CD8-positive, alpha-beta memory T cell (primary cell): ENCODE measurements at regions of chr14 and their contacts with region 1.

Region 1: GRCh38 chr14:91114079-91115065 is 499 bp downstream of the DGLUCY start:
- DNase-seq: peak; percentile 44 to 76 (median 65)
- H3K4me3 ChIP-seq: peak overlapping the region; percentile 78
- H3K4me3 Mint-ChIP-seq: peak overlapping the region; percentile 90 to 98 (median 96)
- H3K27ac ChIP-seq: peak overlapping the region; percentile 88
- H3K27ac Mint-ChIP-seq: peak overlapping the region; percentile 90 to 99 (median 97)
- H3K4me1 ChIP-seq: peaks cover 59% of the 10 kb centered on the region
- H3K4me1 Mint-ChIP-seq: peaks cover 62 to 78% (median 77%) of the 10 kb centered on the region in 3 donors
- H3K27me3 ChIP-seq: no peaks in the 10 kb centered on the region
- H3K27me3 Mint-ChIP-seq: peaks cover 0 to 2% of the 10 kb centered on the region in 2 donors

Region 2: DNA sequence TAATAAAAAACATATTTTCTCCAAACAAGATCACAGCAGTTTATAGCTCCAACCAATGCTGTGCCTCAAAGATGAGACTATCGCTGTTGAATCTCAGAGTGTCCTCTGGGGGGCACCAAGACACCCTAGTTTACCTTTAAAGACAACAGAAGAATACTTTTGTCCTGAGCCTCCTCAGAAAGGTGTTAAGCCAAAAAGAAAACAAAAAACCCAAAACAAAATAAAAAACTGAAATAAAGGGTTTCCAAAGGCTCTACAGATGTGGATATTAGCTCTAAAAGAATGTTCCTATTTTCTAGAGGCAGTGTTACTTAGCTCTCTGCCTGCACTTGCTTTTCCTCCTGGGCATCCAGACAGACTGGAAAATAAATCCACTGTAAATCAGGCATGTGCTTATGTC is 211.3 kb before region 1 on chr14:
- CTCF ChIA-PET with region 1: interaction called, 10 read pairs
- POLR2A ChIA-PET with region 1: no interaction called
- DNase-seq: peak; percentile 24 to 66 (median 45)
- H3K4me3 ChIP-seq: no peak overlapping the region
- H3K4me3 Mint-ChIP-seq: no peak overlapping the region
- H3K27ac ChIP-seq: no peak overlapping the region
- H3K27ac Mint-ChIP-seq: peak overlapping the region in 2 of 8 donors; percentile 38 to 48
- H3K4me1 ChIP-seq: no peaks in the 10 kb centered on the region
- H3K4me1 Mint-ChIP-seq: peaks cover 0 to 7% (median 0%) of the 10 kb centered on the region in 3 donors
- H3K27me3 ChIP-seq: no peaks in the 10 kb centered on the region
- H3K27me3 Mint-ChIP-seq: no peaks in the 10 kb centered on the region

Region 3: GRCh38 chr14:90985601-90986242 is 128.7 kb before region 1 on chr14:
- CTCF ChIA-PET with region 1: no interaction called
- POLR2A ChIA-PET with region 1: no interaction called
- DNase-seq: no peak
- H3K4me3 ChIP-seq: no peak overlapping the region
- H3K4me3 Mint-ChIP-seq: no peak overlapping the region
- H3K27ac ChIP-seq: no peak overlapping the region
- H3K27ac Mint-ChIP-seq: peak overlapping the region in 1 of 8 donors; percentile 25
- H3K4me1 ChIP-seq: no peaks in the 10 kb centered on the region
- H3K4me1 Mint-ChIP-seq: peaks cover 9 to 16% (median 10%) of the 10 kb centered on the region in 3 donors
- H3K27me3 ChIP-seq: no peaks in the 10 kb centered on the region
- H3K27me3 Mint-ChIP-seq: no peaks in the 10 kb centered on the region

Region 4: GRCh38 chr14:91016800-91017410 is 97.5 kb before region 1 on chr14:
- CTCF ChIA-PET with region 1: no interaction called
- POLR2A ChIA-PET with region 1: no interaction called
- DNase-seq: no peak
- H3K4me3 ChIP-seq: no peak overlapping the region
- H3K4me3 Mint-ChIP-seq: no peak overlapping the region
- H3K27ac ChIP-seq: no peak overlapping the region
- H3K27ac Mint-ChIP-seq: peak overlapping the region in 1 of 8 donors; percentile 33
- H3K4me1 ChIP-seq: peaks cover 26% of the 10 kb centered on the region
- H3K4me1 Mint-ChIP-seq: peaks cover 11 to 44% (median 31%) of the 10 kb centered on the region in 3 donors
- H3K27me3 ChIP-seq: no peaks in the 10 kb centered on the region
- H3K27me3 Mint-ChIP-seq: no peaks in the 10 kb centered on the region

Region 5: GRCh38 chr14:91060351-91061055 is 53.9 kb before region 1 on chr14 and contains the start of gene RPS6KA5:
- CTCF ChIA-PET with region 1: interaction called, 11 read pairs
- POLR2A ChIA-PET with region 1: interaction called, 42 read pairs
- DNase-seq: peak; percentile 99 to 100 (median 100)
- H3K4me3 ChIP-seq: peak within 1 kb of the TSS; percentile 79
- H3K4me3 Mint-ChIP-seq: peak within 1 kb of the TSS; percentile 78 to 93 (median 85)
- H3K27ac ChIP-seq: peak within 1 kb of the TSS; percentile 94
- H3K27ac Mint-ChIP-seq: peak within 1 kb of the TSS in 6 of 8 donors; percentile 47 to 89 (median 60)
- H3K4me1 ChIP-seq: peaks cover 49% of the 10 kb centered on the region
- H3K4me1 Mint-ChIP-seq: peaks cover 57 to 66% (median 65%) of the 10 kb centered on the region in 3 donors
- H3K27me3 ChIP-seq: no peaks in the 10 kb centered on the region
- H3K27me3 Mint-ChIP-seq: no peaks in the 10 kb centered on the region
- total RNA-seq, gene RPS6KA5: 17.7 to 19.9 TPM

Region 6: GRCh38 chr14:91078095-91078737 is 36.2 kb before region 1 on chr14:
- CTCF ChIA-PET with region 1: interaction called, 14 read pairs
- POLR2A ChIA-PET with region 1: interaction called, 5 read pairs
- DNase-seq: peak in 3 of 5 donors; percentile 56 to 86 (median 77)
- H3K4me3 ChIP-seq: no peak overlapping the region
- H3K4me3 Mint-ChIP-seq: peak overlapping the region; percentile 1 to 89 (median 77)
- H3K27ac ChIP-seq: no peak overlapping the region
- H3K27ac Mint-ChIP-seq: peak overlapping the region; percentile 7 to 97 (median 90)
- H3K4me1 ChIP-seq: peaks cover 16% of the 10 kb centered on the region
- H3K4me1 Mint-ChIP-seq: peaks cover 29 to 41% (median 38%) of the 10 kb centered on the region in 3 donors
- H3K27me3 ChIP-seq: no peaks in the 10 kb centered on the region
- H3K27me3 Mint-ChIP-seq: no peaks in the 10 kb centered on the region